ENCODE measurements at regions of chr12 and their contacts with region 1.

Region 1: DNA sequence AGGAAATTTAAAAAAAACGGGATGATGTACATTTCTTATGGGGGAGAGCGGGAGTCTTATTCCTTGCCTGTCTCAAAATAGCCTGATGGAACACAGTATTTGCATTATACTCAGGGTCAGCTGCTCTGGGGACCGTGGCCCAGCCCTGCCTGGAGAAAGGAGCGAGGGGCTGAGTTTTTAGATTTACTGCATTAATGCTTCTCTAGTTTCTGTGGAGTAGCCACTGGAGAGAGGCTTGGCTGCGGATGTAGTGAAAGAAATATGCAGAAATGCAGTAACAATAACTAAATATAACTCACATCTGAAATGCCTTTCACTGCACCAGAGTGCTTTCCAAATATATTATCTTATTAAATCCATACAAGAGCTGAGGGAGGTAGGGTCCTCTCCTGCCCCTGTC is 87.6 kb upstream of the MAP1LC3B2 start:
- DNase-seq: no peak
- H3K4me3 ChIP-seq: no peak overlapping the region
- H3K27ac ChIP-seq: no peak overlapping the region
- H3K4me1 ChIP-seq: no peaks in the 10 kb centered on the region
- CTCF ChIP-seq: no peak

Region 2: GRCh38 chr12:116455540-116456329 is 15.8 kb before region 1 on chr12:
- CTCF ChIA-PET with region 1: no interaction called
- POLR2A ChIA-PET with region 1: no interaction called
- intact Hi-C with region 1: no loop called
- DNase-seq: no peak
- H3K4me3 ChIP-seq: no peak overlapping the region
- H3K27ac ChIP-seq: no peak overlapping the region
- H3K4me1 ChIP-seq: no peaks in the 10 kb centered on the region
- CTCF ChIP-seq: no peak

Region 3: GRCh38 chr12:116490471-116490870 is 18.9 kb after region 1 on chr12:
- CTCF ChIA-PET with region 1: no interaction called
- POLR2A ChIA-PET with region 1: no interaction called
- intact Hi-C with region 1: loop called (anchors 2 kb)
- DNase-seq: no peak
- H3K4me3 ChIP-seq: no peak overlapping the region
- H3K27ac ChIP-seq: no peak overlapping the region
- H3K4me1 ChIP-seq: no peaks in the 10 kb centered on the region
- CTCF ChIP-seq: no peak